K562 (cell line): ENCODE measurements at regions of chr14 and their contacts with region 1.

Region 1: DNA sequence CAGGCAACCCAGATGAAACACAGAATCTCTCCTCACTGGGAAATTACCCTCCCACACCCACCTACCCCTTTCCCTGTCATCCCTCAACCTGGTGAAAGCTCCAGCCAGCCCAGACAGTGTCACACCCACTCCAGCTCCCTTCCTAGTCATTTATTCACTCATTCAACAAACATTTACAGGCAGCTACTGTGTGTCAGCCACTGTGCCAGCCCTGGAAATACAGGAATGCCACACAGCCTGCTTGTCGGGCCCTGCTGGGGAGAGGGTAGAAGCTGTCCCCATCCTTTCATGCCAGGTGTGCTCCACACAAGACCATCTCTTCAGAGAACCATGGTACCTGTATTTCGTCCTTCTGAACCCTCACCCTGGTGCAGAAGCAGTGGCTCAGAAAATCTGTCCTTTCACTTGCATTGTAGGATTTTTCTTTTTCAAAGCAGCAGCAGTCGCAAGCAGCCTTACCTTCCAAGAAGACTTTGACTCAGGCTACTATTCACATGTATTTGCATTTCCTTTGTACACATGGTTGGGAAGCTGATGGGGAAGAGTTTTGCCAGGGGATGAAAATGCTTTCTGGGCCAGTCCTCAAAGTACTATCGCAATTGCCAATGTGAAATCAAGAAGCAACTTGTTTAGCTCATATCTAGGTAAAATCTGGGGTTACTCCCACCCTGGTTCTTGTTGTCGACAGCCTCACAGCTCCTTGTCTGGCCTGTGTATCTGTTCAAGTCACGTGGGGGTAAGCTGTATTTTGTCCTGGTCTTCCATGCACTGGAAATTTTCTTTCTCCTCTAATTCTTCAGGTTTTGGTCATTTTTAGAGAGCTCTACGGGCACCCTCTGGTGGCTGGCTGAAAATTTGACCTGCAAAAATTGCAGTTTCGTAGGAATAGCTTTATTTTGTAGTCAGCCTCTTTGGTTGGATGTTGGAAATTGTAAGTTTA is 147.4 kb upstream of the EGLN3 start:
- DNase-seq: peak; percentile 43 to 57 (median 52)
- ATAC-seq: peak; percentile 50; the same call in 2 of the 3 replicates
- H3K4me3 ChIP-seq: no peak overlapping the region
- H3K27ac ChIP-seq: no peak overlapping the region
- H3K4me1 ChIP-seq: peaks cover 0 to 7% of the 10 kb centered on the region in 2 experiments; a peak in 3 of 5 replicates
- H3K27me3 ChIP-seq: no peaks in the 10 kb centered on the region
- CTCF ChIP-seq: peak; percentile 60 to 73 (median 66)
- EP300 ChIP-seq: no peak
- POLR2A ChIP-seq: no peak
- RAD21 ChIP-seq: peak; percentile 83 to 90

Region 2: GRCh38 chr14:33839193-33840076 is 258.9 kb before region 1 on chr14:
- CTCF ChIA-PET with region 1: interaction called, 8 read pairs
- POLR2A ChIA-PET with region 1: no interaction called
- in situ Hi-C with region 1: loop called (anchors 10 kb)
- intact Hi-C with region 1: loop called (anchors 1 kb)
- DNase-seq: peak; percentile 43 to 67 (median 52)
- ATAC-seq: peak; percentile 79
- H3K4me3 ChIP-seq: no peak overlapping the region
- H3K27ac ChIP-seq: no peak overlapping the region
- H3K4me1 ChIP-seq: peaks cover 5 to 25% of the 10 kb centered on the region in 2 experiments; a peak in 4 of 5 replicates
- H3K27me3 ChIP-seq: no peaks in the 10 kb centered on the region
- CTCF ChIP-seq: peak; percentile 63 to 80 (median 66)
- EP300 ChIP-seq: no peak
- POLR2A ChIP-seq: no peak
- RAD21 ChIP-seq: peak; percentile 66 to 77

Region 3: GRCh38 chr14:33943096-33943884 is 155.0 kb before region 1 on chr14:
- CTCF ChIA-PET with region 1: interaction called, 4 read pairs
- POLR2A ChIA-PET with region 1: interaction called, 3 read pairs
- in situ Hi-C with region 1: loop called (anchors 10 kb)
- intact Hi-C with region 1: loop called (anchors 5 kb)
- DNase-seq: peak in 1 of 4 experiments; percentile 40
- ATAC-seq: no peak
- H3K4me3 ChIP-seq: no peak overlapping the region; the same call in 1 of the 2 replicates
- H3K27ac ChIP-seq: no peak overlapping the region
- H3K4me1 ChIP-seq: peaks cover 17 to 48% of the 10 kb centered on the region in 2 experiments; a peak in 4 of 5 replicates
- H3K27me3 ChIP-seq: no peaks in the 10 kb centered on the region
- CTCF ChIP-seq: no peak
- EP300 ChIP-seq: no peak
- POLR2A ChIP-seq: no peak
- RAD21 ChIP-seq: no peak

Region 4: DNA sequence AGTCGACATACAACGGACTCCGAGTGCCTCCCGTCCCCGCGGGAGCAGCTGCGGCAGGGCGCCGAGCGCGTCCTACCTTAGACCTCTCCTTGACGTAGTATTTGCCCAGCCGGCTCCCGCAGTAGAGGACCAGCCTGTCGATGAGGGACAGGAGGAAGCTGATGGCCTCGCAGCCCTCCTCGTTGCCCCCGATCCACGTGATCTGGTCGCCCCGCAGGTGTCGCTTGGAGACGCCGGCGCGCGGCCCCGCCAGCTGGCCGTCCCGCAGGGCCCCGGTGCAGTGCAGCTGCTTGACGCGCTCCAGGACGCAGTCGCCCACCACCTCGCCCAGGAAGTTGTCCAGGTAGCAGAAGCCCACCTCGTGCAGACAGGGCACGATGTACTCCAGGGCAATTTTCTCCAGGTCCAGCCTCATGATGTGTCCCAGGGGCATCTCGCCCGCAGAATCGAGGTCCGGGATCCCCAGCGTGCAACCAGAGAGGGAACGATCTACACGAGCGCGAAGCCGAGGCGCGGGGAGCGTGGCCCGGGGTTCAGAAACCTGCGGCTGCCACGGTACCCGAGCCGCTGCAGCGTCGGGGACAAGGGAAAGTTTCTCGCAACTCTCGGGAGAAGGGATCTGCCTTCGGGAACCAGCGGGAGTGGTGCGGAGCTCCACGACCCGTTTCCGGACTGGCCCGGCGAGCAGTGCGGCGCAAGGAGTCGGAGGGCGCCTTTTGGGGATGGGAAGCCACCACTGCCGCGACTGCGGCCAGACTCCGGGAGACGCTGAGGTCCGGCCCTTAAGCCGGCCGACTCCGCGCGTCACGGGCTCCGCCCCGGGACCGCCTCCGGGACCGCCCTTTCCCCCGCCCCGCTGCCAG is 147.8 kb before region 1 on chr14 and contains the start of gene EGLN3:
- CTCF ChIA-PET with region 1: interaction called, 3 read pairs
- POLR2A ChIA-PET with region 1: interaction called, 5 read pairs
- in situ Hi-C with region 1: loop called (anchors 10 kb)
- intact Hi-C with region 1: loop called (anchors 5 kb)
- DNase-seq: peak; percentile 85 to 90 (median 88)
- ATAC-seq: peak; percentile 95
- H3K4me3 ChIP-seq: peak within 1 kb of the TSS; percentile 60
- H3K27ac ChIP-seq: peak within 1 kb of the TSS; percentile 68
- H3K4me1 ChIP-seq: peaks cover 9 to 13% of the 10 kb centered on the region in 2 experiments; a peak in 4 of 5 replicates
- H3K27me3 ChIP-seq: no peaks in the 10 kb centered on the region
- CTCF ChIP-seq: no peak
- EP300 ChIP-seq: no peak
- POLR2A ChIP-seq: peak; percentile 97
- RAD21 ChIP-seq: 0 out of 4 replicates have a peak, but pooled peaks of 1 of the 2 experiments have one; percentile 8
- polyA plus RNA-seq, gene EGLN3: 2.5 to 3.0 TPM

Region 5: DNA sequence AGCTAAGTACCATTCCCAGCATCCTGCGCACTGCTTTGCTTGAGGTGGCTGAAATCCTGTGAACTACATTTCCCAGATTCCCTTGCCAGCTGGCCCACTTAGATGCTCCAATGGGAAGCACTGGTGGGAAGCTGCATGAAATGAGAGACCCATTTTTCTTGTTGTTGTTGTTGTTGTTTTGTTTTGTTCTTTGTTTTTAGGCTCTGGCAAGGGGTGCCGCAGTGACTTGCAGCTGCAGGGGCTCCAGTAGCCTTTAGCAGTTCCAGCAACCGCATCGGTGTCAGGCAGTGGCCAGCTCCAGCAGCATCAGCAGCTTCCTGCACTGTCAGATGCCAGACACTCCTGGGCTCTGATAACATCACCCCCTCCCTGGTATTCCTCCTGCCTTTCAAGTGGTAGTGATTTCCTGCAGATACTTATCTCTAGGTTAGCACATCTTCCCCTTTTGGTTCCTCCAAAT is 138.6 kb before region 1 on chr14:
- CTCF ChIA-PET with region 1: no interaction called
- POLR2A ChIA-PET with region 1: no interaction called
- in situ Hi-C with region 1: no loop called
- intact Hi-C with region 1: loop called (anchors 5 kb)
- DNase-seq: no peak
- ATAC-seq: no peak
- H3K4me3 ChIP-seq: no peak overlapping the region
- H3K27ac ChIP-seq: no peak overlapping the region
- H3K4me1 ChIP-seq: peaks cover 2 to 18% of the 10 kb centered on the region in 2 experiments; a peak in 4 of 5 replicates
- H3K27me3 ChIP-seq: no peaks in the 10 kb centered on the region
- CTCF ChIP-seq: no peak
- EP300 ChIP-seq: no peak
- POLR2A ChIP-seq: no peak
- RAD21 ChIP-seq: no peak

Region 6: DNA sequence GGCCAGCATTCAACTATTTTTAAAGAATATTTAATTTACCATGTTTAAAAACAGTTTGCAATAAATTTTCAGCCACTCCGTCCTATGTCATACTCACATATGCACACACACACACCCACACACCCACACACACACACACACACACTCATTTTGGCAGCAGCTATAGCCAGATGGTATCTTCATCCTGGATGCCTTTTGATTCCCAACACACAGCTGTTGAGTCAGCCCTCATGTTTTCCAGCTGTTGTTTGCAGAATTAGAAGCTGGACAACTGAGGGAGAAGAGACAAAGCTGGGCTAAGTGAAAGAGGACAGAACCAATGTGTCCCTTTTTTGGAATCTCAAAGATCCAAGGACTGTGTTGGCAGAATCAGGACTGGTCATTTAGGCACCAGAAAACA is 67.5 kb before region 1 on chr14:
- CTCF ChIA-PET with region 1: no interaction called
- POLR2A ChIA-PET with region 1: no interaction called
- in situ Hi-C with region 1: no loop called
- intact Hi-C with region 1: loop called (anchors 5 kb)
- DNase-seq: no peak
- ATAC-seq: no peak
- H3K4me3 ChIP-seq: no peak overlapping the region
- H3K27ac ChIP-seq: no peak overlapping the region
- H3K4me1 ChIP-seq: peaks cover 0 to 23% of the 10 kb centered on the region in 2 experiments; a peak in 3 of 5 replicates
- H3K27me3 ChIP-seq: no peaks in the 10 kb centered on the region; a peak in 1 of 5 replicates
- CTCF ChIP-seq: no peak
- EP300 ChIP-seq: no peak
- POLR2A ChIP-seq: no peak
- RAD21 ChIP-seq: no peak

Region 7: DNA sequence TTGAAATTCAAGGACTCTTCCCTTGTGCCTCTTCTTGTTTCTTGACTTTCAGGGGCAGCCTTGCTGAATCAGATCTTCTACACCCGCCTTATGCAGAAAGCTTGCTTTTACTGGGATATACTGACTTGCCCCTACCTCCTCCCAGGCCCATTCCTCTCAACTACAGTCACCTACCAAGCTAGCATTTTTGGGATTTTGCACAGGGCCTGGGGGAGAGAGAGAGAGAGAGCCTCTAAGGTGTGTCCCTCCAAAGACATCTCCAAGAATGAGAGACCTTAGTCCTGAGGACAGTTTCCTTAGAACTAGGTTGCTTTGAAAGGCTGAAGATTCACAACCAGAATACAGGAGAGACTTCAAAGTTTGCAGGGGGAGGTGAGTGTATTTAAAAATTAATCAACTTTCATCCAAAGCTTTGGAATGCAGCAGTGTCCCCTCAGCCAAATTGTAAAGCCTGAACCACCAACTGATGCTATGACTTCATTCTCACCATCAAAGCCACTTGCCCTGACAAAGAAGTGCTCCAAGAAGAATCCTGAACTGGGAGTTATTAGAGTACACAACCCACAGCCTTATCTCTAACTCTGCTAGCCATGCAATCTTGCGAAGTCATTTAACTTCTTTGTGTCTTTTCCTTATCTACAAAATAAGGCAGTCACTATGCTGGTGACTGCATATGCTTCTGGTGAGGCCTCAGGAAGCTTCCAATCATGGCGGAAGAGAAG is 51.4 kb before region 1 on chr14:
- CTCF ChIA-PET with region 1: no interaction called
- POLR2A ChIA-PET with region 1: no interaction called
- in situ Hi-C with region 1: no loop called
- intact Hi-C with region 1: loop called (anchors 2 kb)
- DNase-seq: peak; percentile 47 to 88 (median 65)
- ATAC-seq: peak; percentile 76
- H3K4me3 ChIP-seq: no peak overlapping the region
- H3K27ac ChIP-seq: peak overlapping the region; percentile 63
- H3K4me1 ChIP-seq: peaks cover 13 to 41% of the 10 kb centered on the region in 2 experiments; a peak in 4 of 5 replicates
- H3K27me3 ChIP-seq: no peaks in the 10 kb centered on the region
- CTCF ChIP-seq: no peak
- EP300 ChIP-seq: peak; percentile 84
- POLR2A ChIP-seq: no peak
- RAD21 ChIP-seq: peak in 1 of 2 experiments; percentile 28; a peak in 2 of 4 replicates